ENCODE measurements at regions of chr16 and their contacts with region 1.

Region 1: DNA sequence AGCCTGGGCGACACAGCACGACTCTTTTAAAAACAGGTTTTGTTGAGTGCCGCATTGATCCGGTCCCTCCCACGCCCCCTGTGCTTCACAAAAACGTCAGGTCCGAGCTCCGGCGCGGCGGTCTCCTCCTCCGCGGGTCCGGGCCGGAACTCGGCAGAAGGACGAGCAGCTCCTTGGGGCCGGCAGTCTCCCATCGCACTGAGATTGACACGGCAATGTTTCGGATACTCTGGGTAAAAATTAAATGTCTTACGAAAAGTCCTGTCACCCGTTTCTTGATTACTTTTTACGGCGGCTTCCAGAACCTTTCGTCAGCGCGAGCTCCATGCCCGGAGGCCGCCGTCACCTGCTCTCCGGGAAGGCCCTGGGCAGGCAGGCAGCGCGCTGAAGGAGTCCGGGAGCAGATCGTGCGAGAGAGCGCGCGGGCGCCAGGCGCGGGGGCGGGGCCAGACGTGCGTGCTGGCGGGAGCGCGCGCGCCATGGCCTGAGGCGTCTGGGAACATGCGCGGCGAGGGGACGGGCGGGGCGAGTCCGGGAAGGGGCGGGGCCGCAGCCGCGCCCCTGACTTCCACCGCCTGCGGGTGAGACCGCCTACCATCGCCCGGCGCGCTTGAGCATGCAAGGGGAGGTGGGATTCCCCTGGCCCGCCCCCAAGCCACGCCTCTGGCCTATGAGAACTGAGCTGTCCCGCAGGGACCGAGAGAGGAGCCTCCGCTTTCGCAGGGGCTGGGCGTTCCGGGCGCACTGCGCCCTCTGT is 11.7 kb upstream of the SRL start:
- DNase-seq: peak; percentile 99
- H3K4me3 Mint-ChIP-seq: peak overlapping the region; percentile 94
- H3K27ac Mint-ChIP-seq: peak overlapping the region; percentile 98
- H3K4me1 Mint-ChIP-seq: peaks cover 4% of the 10 kb centered on the region
- H3K27me3 Mint-ChIP-seq: peaks cover 2% of the 10 kb centered on the region

Region 2: DNA sequence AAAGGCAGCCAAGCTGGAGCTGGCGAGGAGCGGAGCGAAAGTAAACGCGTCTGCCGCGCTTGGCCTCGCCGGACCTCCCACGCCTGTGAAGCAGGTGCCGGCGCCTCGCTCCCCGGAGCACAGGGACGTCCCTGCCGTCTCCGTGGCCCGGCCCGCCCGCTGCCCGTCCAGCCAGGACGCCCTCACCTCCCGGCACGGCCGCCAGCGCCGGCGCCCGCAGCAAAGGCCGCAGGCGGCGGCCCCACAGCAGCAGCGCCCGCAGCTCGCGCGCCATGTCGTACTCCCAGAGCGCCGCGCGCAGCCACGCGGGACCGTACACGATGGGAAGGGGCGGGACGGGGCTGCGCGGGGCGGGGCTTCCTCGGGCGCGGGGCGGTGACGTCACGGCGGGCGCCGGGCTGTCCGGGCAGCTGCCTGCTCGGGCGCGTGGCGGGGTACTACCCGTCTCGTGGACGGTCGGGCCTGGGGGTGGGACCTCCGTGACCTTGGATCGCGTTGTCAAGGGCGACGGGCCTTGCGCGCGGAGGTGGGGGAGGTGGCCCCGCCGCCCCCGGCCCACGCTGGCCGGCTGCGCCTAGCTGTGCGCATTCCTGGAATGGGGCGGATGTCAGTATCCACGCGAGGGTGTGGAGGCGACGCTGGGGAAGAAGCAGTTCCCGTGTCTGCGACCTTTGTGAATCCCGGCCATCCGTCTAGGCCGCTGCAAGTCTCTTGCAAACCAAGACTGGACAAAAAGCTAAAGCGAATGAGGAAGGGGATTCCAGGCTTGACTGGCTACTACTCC is 536.1 kb before region 1 on chr16 and contains the start of gene TRAP1:
- intact Hi-C with region 1: loop called (anchors 1 kb)
- DNase-seq: peak; percentile 87
- H3K4me3 Mint-ChIP-seq: peak within 1 kb of the TSS; percentile 91
- H3K27ac Mint-ChIP-seq: peak within 1 kb of the TSS; percentile 90
- H3K4me1 Mint-ChIP-seq: peaks cover 33% of the 10 kb centered on the region
- H3K27me3 Mint-ChIP-seq: peaks cover 2% of the 10 kb centered on the region
- total RNA-seq, gene TRAP1: 351 and 353 TPM in 2 replicates

Region 3: GRCh38 chr16:3961449-3961849 is 292.1 kb before region 1 on chr16:
- intact Hi-C with region 1: loop called (anchors 5 kb)
- DNase-seq: no peak
- H3K4me3 Mint-ChIP-seq: no peak overlapping the region
- H3K27ac Mint-ChIP-seq: no peak overlapping the region
- H3K4me1 Mint-ChIP-seq: peaks cover 25% of the 10 kb centered on the region
- H3K27me3 Mint-ChIP-seq: peaks cover 9% of the 10 kb centered on the region

Region 4: GRCh38 chr16:4116337-4117249 is 137.0 kb before region 1 on chr16 and contains the start of gene ADCY9:
- intact Hi-C with region 1: loop called (anchors 1 kb)
- DNase-seq: peak; percentile 84
- H3K4me3 Mint-ChIP-seq: peak within 1 kb of the TSS; percentile 82
- H3K27ac Mint-ChIP-seq: peak within 1 kb of the TSS; percentile 64
- H3K4me1 Mint-ChIP-seq: peaks cover 41% of the 10 kb centered on the region
- H3K27me3 Mint-ChIP-seq: peaks cover 14% of the 10 kb centered on the region
- total RNA-seq, gene ADCY9: 9.4 and 9.7 TPM in 2 replicates

Region 5: GRCh38 chr16:4277987-4278513 is 24.5 kb after region 1 on chr16:
- intact Hi-C with region 1: no loop called
- DNase-seq: no peak
- H3K4me3 Mint-ChIP-seq: no peak overlapping the region
- H3K27ac Mint-ChIP-seq: no peak overlapping the region
- H3K4me1 Mint-ChIP-seq: no peaks in the 10 kb centered on the region
- H3K27me3 Mint-ChIP-seq: peaks cover 4% of the 10 kb centered on the region

Region 6: DNA sequence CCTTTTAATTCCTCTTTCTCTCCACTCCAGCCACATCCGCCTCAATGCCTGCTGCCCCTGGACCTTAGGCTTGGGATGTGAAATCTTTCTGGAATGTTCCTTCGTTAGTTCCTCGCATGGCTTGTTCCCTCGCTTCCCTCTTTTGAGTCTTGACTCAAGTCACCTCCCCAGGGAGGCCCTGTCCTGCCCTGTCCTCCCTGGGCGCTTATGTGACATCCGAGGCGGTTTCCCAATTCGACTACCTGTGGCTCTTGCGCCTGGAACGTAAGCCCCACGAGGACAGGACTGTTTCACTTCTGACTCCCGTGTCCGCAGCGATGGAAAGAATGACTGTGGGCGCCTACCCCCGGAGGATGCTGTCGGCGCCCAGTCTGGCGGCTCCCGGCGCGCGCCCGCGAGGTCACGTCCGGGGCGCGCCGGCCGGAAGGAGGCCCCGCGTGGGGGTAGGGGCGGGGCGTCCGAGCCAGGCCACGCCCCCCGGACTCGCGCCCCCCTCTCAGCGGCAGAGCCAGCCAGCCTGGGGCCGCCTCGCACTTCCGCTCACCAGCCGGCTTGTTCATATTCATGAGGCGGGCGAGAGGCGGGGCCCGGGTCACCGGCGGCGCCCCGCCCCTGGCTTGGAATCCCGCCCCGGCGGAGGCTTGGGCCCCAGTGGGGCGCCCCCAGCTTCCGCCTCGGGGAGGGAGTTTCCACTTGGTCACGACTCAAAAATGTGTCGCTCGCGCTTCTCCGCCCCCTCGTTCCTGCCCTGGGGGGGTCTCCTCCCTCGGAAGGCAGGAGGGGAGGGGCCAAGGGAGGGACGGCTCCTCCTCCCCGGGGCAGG is 53.9 kb after region 1 on chr16:
- intact Hi-C with region 1: loop called (anchors 1 kb)
- DNase-seq: peak; percentile 97
- H3K4me3 Mint-ChIP-seq: peak overlapping the region; percentile 96
- H3K27ac Mint-ChIP-seq: peak overlapping the region; percentile 96
- H3K4me1 Mint-ChIP-seq: peaks cover 22% of the 10 kb centered on the region
- H3K27me3 Mint-ChIP-seq: peaks cover 6% of the 10 kb centered on the region

Region 7: DNA sequence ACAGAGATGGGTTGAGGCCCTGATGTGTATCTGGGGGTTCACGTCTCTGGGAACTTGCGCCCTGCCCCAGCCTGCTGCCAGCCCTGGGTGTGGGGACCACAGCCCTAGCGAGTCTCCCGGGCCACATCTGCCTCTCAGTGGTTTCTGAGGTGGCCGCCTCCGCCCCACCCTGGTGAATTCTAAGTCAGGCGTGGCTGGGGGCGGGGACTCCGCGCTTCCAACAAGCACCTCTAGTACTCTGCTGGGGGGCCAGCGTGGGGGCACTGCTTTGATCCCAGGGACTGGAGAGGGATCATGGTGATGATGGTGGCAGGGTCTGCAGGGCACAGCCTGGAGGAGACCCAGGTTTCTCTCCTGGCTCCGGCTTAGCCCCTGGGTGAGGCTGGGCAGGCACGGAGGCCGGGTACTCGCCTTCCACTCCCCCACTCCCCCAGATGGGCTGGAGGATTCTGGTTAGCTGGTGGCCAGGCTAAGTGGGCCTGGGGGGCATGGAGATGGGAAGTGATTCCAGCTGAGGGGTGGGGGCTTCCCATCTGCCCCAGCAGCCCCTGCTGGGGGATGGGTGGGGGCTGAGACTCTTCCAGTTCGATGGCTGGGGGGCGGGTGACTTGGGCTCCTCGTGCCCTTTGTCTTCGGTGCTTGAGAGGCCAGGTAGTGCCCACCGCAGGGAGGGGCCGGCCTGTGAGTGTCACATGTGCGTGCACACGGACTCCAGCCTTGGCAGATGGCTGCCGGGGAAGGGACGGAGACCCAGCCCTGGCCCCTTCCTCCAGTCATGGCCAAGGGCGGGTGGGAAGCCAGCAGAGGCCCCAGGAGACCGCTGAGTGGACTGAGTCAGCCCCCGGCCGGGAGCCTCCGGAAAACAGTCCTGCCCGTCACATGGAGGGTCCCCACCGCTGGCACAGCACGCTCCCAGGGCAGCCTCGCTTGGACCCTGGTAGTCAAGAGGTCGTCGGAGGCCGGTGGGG is 66.2 kb after region 1 on chr16:
- intact Hi-C with region 1: no loop called
- DNase-seq: peak; percentile 32
- H3K4me3 Mint-ChIP-seq: peak overlapping the region; percentile 22
- H3K27ac Mint-ChIP-seq: no peak overlapping the region
- H3K4me1 Mint-ChIP-seq: peaks cover 10% of the 10 kb centered on the region
- H3K27me3 Mint-ChIP-seq: peaks cover 7% of the 10 kb centered on the region

Region 8: DNA sequence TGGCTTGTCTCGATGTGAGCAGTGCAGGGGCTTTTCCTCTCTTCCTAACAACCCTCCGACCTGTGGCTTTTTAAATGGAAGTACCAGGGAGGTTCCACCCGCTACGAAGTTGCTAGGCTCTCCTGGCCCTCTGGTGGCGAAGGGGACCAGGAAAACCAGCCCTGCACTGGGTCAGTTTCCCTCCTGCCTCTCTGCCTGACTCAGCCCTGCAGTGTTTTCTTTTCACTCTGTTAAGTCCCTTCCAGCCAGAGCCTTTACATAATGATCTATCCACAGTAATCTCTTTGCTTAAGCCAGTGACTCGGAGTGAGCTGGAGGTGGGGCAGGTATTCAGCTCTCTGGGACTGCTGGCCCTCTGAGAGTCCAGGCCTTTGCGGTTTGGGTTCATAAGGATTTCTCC is 1175.4 kb after region 1 on chr16:
- intact Hi-C with region 1: no loop called
- DNase-seq: no peak
- H3K4me3 Mint-ChIP-seq: no peak overlapping the region
- H3K27ac Mint-ChIP-seq: no peak overlapping the region
- H3K4me1 Mint-ChIP-seq: no peaks in the 10 kb centered on the region
- H3K27me3 Mint-ChIP-seq: no peaks in the 10 kb centered on the region